ENCODE measurements at regions of chr12 and their contacts with region 1.

Region 1: DNA sequence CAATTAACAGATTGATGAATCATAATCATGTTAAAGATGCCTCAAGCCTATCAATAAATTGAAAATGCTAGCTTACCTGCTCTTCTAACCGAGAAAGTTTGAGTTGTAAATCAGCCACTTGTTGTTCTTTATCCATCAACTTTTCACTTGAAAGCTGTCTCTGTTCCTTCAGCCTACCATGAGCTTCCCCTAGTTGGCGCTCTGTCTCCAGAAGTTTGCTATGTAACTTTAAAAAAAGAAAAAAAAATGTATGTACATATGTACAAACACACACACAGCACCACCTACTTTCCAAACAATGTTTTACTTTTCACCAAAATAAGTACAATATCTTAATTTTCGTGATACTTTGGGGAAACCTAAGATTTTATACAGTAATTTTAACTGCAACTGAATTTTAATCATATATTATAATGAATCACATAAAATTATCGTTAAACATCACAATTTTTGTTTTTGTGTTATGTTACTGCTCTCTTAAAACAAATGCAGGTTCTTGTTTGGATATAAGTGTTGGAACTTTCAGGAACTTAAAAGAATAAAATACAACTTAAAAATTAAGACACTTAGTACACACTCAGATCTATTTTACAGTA is 101.2 kb downstream of the EEA1 start:
- DNase-seq: peak; percentile 46
- CTCF ChIP-seq: peak; percentile 55

Region 2: DNA sequence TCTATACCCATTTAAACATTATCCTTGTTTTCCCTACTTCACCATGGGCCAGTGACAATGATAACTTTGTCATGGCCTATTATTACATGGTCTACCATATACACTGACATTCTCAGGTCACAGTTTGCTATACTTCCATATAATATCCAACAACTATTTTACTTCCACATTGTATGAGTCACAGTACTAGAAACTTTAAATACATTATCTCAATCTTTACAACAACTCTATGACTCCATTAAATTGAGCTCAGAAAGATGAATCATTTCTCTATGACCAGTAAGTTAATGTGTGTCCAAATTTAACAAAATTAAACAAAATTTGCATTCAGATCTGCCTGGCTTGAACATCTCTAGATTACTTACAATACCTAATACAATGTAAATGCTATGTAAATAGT is 31.3 kb before region 1 on chr12:
- CTCF ChIA-PET with region 1: no interaction called
- POLR2A ChIA-PET with region 1: no interaction called
- DNase-seq: no peak
- CTCF ChIP-seq: no peak

Region 3: DNA sequence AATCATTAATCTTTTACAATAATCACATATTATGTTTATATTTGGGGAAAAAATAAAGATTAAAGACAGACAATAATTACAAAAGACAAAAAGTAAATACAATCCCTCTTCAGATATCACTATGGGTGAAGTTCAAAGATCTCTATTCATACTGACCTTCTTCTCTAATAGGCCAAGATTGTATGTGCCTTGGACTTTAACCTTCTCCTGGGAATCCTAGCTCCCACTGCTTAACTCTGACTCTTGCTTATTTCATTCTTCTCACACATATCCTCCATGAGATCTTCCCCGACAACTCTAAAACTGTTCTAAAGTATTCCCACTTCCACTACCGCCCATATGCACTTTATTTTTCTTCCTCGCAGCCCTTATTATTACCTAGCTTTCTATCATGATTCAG is 17.4 kb after region 1 on chr12:
- CTCF ChIA-PET with region 1: interaction called, 12 read pairs
- POLR2A ChIA-PET with region 1: no interaction called
- DNase-seq: no peak
- CTCF ChIP-seq: no peak